Activated CD8-positive, alpha-beta T cell treated with anti-CD3 and anti-CD28 coated beads for 36 hours (primary cell): ENCODE measurements at regions of chr17 and their contacts with region 1.

Region 1: DNA sequence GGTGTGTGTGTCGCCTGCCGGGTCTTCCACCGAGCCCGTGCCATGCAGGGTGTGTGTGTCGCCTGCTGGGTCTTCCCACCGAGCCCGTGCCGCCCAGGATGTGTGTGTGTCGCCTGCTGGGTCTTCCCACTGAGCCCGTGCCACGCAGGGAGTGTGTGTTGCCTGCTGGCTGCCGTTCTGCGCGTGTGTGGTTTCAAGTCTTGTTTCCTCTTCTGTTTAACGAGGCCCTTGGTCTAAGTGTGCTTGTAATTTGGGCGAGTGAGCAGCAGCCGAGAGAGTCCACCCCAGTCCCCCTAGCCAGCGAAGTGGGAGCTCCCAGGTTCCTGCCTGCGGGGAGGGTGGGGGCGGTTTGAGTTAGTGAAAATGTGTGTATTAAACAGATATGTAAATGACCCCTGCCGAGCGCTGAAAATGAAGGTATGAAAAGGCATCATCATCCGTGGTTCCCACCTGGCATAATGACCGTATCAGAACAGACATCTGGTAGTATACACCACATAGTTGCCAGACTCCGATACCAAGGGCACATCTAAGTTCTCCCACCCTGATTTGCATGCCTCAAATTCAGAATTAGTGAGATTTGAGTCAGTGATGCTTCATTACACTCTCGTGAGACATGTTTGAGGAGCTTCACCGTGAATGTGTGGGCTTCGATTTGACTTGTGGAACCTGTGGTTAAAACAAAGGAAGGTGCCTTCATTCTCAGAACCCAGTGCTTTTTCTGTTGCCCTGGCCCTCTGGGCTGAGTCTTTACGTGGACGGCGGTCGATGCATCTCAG is 114.5 kb upstream of the CHMP6 start:
- DNase-seq: peak; percentile 92
- ATAC-seq: peak; percentile 91
- H3K4me3 Mint-ChIP-seq: peak overlapping the region; percentile 55
- H3K27ac Mint-ChIP-seq: peak overlapping the region; percentile 95
- H3K4me1 Mint-ChIP-seq: peaks cover 62% of the 10 kb centered on the region
- H3K27me3 Mint-ChIP-seq: no peaks in the 10 kb centered on the region
- CTCF ChIP-seq: no peak

Region 2: DNA sequence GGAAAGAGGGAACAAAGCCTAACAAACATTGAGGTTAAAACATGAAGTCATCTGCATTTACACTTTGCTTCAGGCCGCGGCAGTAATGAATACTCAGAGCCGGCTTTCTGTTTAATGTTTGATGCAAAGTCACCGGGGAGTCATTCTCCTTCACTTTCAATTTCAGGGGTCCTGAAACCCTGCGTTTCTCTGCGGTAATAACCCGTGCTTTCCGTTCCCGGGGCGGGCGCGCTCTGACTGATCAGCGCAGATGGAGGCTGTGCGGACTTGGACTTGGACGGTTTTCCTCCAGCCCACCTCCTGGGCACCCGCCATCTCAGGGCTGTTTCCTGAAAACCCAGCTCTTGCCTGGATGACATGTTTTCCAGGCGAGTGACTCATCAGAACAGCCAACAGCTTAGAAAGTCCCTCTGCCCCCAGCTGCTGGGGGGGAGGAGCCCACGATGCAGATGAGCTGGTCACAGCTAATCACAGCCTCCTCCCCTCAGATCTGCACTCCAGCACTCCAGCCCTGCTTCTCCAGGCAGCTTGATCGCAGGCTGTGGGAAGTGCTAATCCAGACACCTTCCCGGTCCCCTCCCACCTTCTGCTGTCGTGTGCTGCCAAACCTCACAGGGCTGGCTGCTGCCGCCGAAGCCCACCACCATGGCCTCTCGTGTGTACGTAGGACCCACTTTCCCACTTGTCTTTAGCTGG is 44.1 kb before region 1 on chr17:
- CTCF ChIA-PET with region 1: interaction called, 11 read pairs
- POLR2A ChIA-PET with region 1: interaction called, 12 read pairs
- intact Hi-C with region 1: no loop called
- DNase-seq: peak; percentile 90
- ATAC-seq: peak; percentile 91
- H3K4me3 Mint-ChIP-seq: peak overlapping the region; percentile 77
- H3K27ac Mint-ChIP-seq: peak overlapping the region; percentile 96
- H3K4me1 Mint-ChIP-seq: peaks cover 30% of the 10 kb centered on the region
- H3K27me3 Mint-ChIP-seq: no peaks in the 10 kb centered on the region
- CTCF ChIP-seq: no peak

Region 3: DNA sequence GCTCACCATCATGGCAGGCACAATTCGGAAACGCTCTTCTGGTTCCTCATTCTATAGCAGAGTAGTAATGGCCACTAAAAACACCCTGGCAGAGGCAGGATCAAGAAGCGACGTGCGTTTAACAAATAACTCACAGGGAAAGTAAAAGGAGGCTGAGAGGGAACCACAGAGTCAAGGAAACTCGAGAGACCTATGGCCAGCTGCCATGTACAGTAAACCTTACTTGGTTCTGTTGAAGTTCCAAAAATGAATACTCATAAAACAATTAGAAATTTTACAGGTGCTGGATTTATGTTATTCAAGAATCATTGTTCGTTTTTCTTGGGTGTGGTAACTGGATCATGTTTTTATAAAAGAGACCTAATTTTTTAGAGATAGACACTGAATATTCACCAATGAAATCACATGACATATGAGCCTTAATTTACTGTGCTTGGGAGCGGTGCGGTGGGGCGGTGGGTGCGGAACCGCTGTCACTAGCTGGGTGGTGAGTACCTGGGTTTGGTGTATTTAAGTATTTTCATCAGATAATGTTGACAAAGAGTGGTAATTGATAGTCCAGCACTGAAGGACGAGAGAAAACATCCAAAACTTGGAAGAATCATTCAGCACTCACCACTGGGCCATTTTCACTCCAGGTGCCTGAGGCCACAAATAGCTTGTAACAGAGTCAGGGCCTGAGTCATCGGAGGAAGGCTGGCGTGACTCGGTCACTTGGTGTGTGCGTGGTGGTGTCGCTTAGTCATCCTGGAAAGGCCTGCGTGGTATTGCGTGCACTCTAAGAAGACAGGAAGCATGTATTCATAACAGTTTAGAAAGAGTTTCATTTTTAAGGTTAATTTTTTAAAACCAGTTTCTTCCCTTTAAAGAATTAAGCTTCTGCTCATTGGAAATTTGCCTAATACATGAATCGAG is 20.9 kb before region 1 on chr17:
- CTCF ChIA-PET with region 1: interaction called, 5 read pairs
- POLR2A ChIA-PET with region 1: interaction called, 19 read pairs
- intact Hi-C with region 1: no loop called
- DNase-seq: peak; percentile 97
- ATAC-seq: peak; percentile 97
- H3K4me3 Mint-ChIP-seq: peak overlapping the region; percentile 41
- H3K27ac Mint-ChIP-seq: peak overlapping the region; percentile 98
- H3K4me1 Mint-ChIP-seq: peaks cover 62% of the 10 kb centered on the region
- H3K27me3 Mint-ChIP-seq: no peaks in the 10 kb centered on the region
- CTCF ChIP-seq: no peak

Region 4: DNA sequence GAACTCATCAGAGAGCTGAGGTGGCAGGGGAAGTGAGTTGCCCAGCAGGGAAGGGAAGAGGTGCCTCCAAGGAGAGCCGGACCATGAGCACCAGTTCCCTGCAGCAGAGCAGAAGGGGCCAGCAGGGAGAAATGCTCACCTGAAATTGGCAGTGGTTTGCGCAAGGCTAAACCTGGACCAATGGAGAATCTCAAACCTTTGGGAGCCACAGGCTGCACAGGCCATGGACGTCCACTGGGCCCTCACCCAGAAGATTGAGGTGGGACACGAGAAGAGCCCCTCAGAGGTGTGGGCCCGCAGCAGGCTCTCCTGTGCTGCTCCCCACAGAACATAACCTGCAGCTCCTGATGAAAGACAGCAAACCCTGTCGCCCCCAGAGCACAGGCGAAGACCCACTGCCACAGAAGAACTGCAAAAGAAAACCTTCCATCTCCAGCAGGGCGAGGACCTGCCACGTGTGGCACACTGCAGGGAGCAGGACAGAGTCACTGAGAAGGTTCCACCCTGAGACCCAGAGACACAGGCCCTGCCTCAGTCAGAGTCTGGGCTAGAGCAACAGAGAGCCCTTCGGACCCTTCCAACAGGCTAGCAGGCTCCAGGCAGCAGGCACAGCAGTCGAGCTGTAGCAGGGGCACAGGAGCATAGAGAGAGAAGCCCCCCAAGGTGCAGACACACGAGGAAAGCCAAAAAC is 54.3 kb after region 1 on chr17:
- CTCF ChIA-PET with region 1: no interaction called
- POLR2A ChIA-PET with region 1: no interaction called
- intact Hi-C with region 1: no loop called
- DNase-seq: no peak
- ATAC-seq: no peak
- H3K4me3 Mint-ChIP-seq: no peak overlapping the region
- H3K27ac Mint-ChIP-seq: no peak overlapping the region
- H3K4me1 Mint-ChIP-seq: peaks cover 7% of the 10 kb centered on the region
- H3K27me3 Mint-ChIP-seq: no peaks in the 10 kb centered on the region
- CTCF ChIP-seq: no peak

Region 5: GRCh38 chr17:81009136-81009535 is 132.0 kb after region 1 on chr17:
- CTCF ChIA-PET with region 1: no interaction called
- POLR2A ChIA-PET with region 1: no interaction called
- intact Hi-C with region 1: no loop called
- DNase-seq: no peak
- ATAC-seq: no peak
- H3K4me3 Mint-ChIP-seq: no peak overlapping the region
- H3K27ac Mint-ChIP-seq: no peak overlapping the region
- H3K4me1 Mint-ChIP-seq: peaks cover 6% of the 10 kb centered on the region
- H3K27me3 Mint-ChIP-seq: peaks cover 11% of the 10 kb centered on the region
- CTCF ChIP-seq: no peak